HEK293 (cell line): ENCODE measurements at regions of chr14 and their contacts with region 1.

Region 1: GRCh38 chr14:77314043-77314442 is 6.6 kb downstream of the POMT2 start:
- H3K4me3 ChIP-seq: no peak overlapping the region
- H3K27ac ChIP-seq: no peak overlapping the region
- H3K4me1 ChIP-seq: peaks cover 23% of the 10 kb centered on the region
- CTCF ChIP-seq: no peak

Region 2: DNA sequence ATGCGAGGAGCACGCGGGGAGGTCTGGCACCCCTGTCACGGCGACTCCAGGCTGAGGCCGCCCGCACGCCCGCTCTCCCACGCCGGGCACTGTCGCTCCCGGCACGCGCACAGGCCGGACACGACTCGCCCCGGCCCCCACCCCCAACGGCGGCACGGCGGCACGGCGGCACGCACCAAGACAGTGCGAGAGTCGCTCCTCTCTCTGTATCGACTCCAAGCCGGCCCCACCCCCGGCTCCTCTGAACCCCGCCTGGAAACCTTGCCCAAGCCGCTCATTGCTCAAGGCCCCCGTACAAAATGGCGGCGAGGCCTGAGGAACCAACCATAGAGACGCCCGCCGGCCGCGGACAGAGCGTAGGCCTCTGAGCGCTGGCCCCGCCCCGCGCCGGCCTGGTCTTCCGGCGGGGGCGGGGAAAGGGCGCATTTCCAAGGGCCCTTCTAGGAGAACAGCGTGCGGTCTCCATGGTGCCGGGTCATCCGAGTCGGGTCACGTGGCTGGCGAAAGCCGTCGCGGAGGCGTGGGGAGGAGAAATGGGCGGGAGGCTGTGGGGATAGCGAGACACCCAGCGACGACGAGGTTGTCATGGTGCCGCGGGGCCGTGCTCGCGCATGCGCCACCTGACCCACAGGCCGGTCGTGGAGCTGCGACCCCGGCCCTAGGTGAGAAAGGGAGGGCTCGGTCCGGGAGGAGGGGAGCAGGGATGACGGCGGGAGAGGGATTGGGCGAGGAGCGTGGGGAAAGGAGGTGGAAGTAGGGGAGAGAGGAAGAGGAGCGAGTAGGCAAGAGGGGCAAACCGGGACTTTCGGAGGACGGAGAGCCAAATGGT is 216.1 kb before region 1 on chr14 and contains the start of gene CIPC:
- CTCF ChIA-PET with region 1: interaction called, 10 read pairs
- POLR2A ChIA-PET with region 1: no interaction called
- H3K4me3 ChIP-seq: peak within 1 kb of the TSS; percentile 88
- H3K27ac ChIP-seq: peak within 1 kb of the TSS; percentile 87
- H3K4me1 ChIP-seq: peaks cover 18% of the 10 kb centered on the region
- CTCF ChIP-seq: peak; percentile 41; the same call in 1 of the 2 replicates

Region 3: GRCh38 chr14:77151918-77152588 is 162.0 kb before region 1 on chr14:
- CTCF ChIA-PET with region 1: interaction called, 22 read pairs
- POLR2A ChIA-PET with region 1: interaction called, 3 read pairs
- H3K4me3 ChIP-seq: no peak overlapping the region
- H3K27ac ChIP-seq: no peak overlapping the region
- H3K4me1 ChIP-seq: no peaks in the 10 kb centered on the region
- CTCF ChIP-seq: no peak

Region 4: GRCh38 chr14:77212943-77213678 is 100.9 kb before region 1 on chr14:
- CTCF ChIA-PET with region 1: interaction called, 11 read pairs
- POLR2A ChIA-PET with region 1: no interaction called
- H3K4me3 ChIP-seq: no peak overlapping the region
- H3K27ac ChIP-seq: no peak overlapping the region
- H3K4me1 ChIP-seq: no peaks in the 10 kb centered on the region
- CTCF ChIP-seq: peak; percentile 55; the same call in 1 of the 2 replicates

Region 5: GRCh38 chr14:77278461-77279230 is 35.4 kb before region 1 on chr14:
- CTCF ChIA-PET with region 1: interaction called, 11 read pairs
- POLR2A ChIA-PET with region 1: no interaction called
- H3K4me3 ChIP-seq: no peak overlapping the region
- H3K27ac ChIP-seq: no peak overlapping the region
- H3K4me1 ChIP-seq: no peaks in the 10 kb centered on the region
- CTCF ChIP-seq: no peak

Region 6: DNA sequence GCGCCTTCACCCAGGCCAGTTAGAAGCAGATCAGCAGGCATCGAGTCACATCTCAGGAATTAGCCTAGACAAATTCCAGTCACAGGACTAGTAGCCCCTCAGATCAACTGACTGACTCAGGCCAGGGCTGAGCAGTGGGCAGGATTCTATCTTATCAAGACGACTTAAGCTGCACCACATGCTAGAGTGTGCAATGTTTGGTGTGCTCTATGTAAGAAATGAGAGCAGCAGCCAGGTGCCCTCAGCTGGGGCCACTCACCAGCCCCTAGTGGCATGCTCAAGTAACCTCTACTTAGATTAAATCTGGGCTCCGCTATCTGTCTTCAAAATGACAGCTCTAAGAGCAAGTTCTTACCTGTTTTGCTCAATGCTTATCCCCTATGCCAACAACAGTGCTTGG is 23.3 kb before region 1 on chr14:
- CTCF ChIA-PET with region 1: interaction called, 16 read pairs
- POLR2A ChIA-PET with region 1: no interaction called
- H3K4me3 ChIP-seq: no peak overlapping the region
- H3K27ac ChIP-seq: no peak overlapping the region
- H3K4me1 ChIP-seq: no peaks in the 10 kb centered on the region
- CTCF ChIP-seq: no peak

Region 7: GRCh38 chr14:77301103-77301502 is 12.9 kb before region 1 on chr14:
- CTCF ChIA-PET with region 1: interaction called, 293 read pairs
- POLR2A ChIA-PET with region 1: interaction called, 15 read pairs
- H3K4me3 ChIP-seq: no peak overlapping the region
- H3K27ac ChIP-seq: no peak overlapping the region
- H3K4me1 ChIP-seq: peaks cover 22% of the 10 kb centered on the region
- CTCF ChIP-seq: peak; percentile 78